A673 (cell line): ENCODE measurements at regions of chr12 and their contacts with region 1.

Region 1: GRCh38 chr12:47602325-47602724 is 103.5 kb downstream of the RPAP3 start:
- DNase-seq: no peak
- H3K4me3 ChIP-seq: no peak overlapping the region
- H3K27ac ChIP-seq: no peak overlapping the region
- H3K4me1 ChIP-seq: no peaks in the 10 kb centered on the region
- H3K27me3 ChIP-seq: no peaks in the 10 kb centered on the region
- CTCF ChIP-seq: no peak

Region 2: GRCh38 chr12:47012552-47012951 is 589.8 kb before region 1 on chr12:
- CTCF ChIA-PET with region 1: no interaction called
- POLR2A ChIA-PET with region 1: interaction called, 16 read pairs
- intact Hi-C with region 1: no loop called
- DNase-seq: peak; percentile 33
- H3K4me3 ChIP-seq: no peak overlapping the region
- H3K27ac ChIP-seq: no peak overlapping the region
- H3K4me1 ChIP-seq: no peaks in the 10 kb centered on the region
- H3K27me3 ChIP-seq: no peaks in the 10 kb centered on the region
- CTCF ChIP-seq: no peak

Region 3: DNA sequence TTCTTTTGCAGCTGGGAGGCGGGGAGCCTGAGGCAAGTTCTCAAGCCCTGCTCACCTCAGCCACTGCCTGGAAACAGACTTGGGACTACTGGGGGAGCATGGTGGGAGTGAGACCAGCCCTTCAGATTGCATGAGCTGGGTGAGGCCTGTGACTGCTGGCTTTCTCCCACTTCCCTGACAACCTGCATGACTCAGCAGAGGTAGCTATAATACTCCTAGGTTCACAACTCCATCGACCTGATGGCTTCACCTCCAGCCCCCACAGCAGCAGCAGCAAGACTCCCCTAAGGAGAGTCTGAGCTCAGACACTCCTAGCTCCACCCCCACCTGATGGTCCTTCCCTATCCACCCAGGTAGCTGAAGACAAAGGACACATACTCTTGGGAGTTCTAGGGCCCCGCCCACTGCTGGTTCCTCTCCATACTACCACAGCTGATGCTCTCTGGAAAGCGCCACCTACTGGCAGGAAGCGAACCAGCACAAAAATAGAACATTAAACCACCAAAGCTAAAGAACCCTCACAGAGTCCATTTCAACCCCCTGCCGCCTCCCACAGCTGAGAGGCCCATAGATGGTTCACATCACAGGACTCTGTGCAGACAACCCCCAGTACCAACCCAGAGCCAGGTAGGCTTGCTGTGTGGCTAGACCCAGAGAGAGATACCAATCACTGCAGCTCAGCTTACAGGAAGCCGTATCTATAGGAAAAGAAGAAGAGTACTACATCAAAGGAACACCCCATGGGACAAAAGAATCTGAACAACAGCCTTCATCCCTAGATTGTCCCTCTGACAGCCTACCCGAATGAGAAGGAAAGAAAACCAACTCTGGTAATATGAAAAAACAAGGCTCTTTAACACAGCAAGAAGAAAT is 34.8 kb after region 1 on chr12:
- CTCF ChIA-PET with region 1: no interaction called
- POLR2A ChIA-PET with region 1: no interaction called
- intact Hi-C with region 1: no loop called
- DNase-seq: peak; percentile 76
- H3K4me3 ChIP-seq: no peak overlapping the region
- H3K27ac ChIP-seq: no peak overlapping the region
- H3K4me1 ChIP-seq: no peaks in the 10 kb centered on the region
- H3K27me3 ChIP-seq: no peaks in the 10 kb centered on the region
- CTCF ChIP-seq: peak; percentile 84

Region 4: GRCh38 chr12:47882781-47883546 is 280.6 kb after region 1 on chr12:
- CTCF ChIA-PET with region 1: no interaction called
- POLR2A ChIA-PET with region 1: no interaction called
- intact Hi-C with region 1: no loop called
- DNase-seq: no peak
- H3K4me3 ChIP-seq: no peak overlapping the region
- H3K27ac ChIP-seq: no peak overlapping the region
- H3K4me1 ChIP-seq: no peaks in the 10 kb centered on the region
- H3K27me3 ChIP-seq: no peaks in the 10 kb centered on the region
- CTCF ChIP-seq: no peak

Region 5: DNA sequence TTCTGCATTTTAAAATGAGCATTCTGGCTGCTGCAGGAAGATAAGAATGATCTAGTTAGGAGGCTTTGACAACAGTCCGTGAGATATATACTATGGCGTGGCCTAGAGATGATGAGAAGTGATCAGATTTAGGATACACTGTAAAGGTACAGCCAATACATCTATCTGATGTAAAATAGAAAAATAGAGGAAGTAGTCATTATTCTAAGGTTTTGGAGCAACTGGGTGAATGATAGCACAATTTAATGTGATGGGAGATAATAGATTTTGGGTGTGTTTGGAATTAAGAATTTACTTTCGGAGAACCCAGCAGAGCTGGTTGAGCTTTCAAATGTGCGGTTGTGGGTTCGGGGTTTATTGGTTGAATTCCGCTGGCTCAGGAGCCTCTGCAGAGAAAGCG is 869.9 kb after region 1 on chr12 and contains the start of gene ANP32D:
- CTCF ChIA-PET with region 1: no interaction called
- POLR2A ChIA-PET with region 1: no interaction called
- intact Hi-C with region 1: no loop called
- DNase-seq: no peak
- H3K4me3 ChIP-seq: no peak within 1 kb of the TSS
- H3K27ac ChIP-seq: no peak within 1 kb of the TSS
- H3K4me1 ChIP-seq: no peaks in the 10 kb centered on the region
- H3K27me3 ChIP-seq: no peaks in the 10 kb centered on the region
- CTCF ChIP-seq: no peak
- total RNA-seq, gene ANP32D: not detected in 2 replicates